PC-3 (cell line): ENCODE measurements at regions of chr6 and their contacts with region 1.

Region 1: DNA sequence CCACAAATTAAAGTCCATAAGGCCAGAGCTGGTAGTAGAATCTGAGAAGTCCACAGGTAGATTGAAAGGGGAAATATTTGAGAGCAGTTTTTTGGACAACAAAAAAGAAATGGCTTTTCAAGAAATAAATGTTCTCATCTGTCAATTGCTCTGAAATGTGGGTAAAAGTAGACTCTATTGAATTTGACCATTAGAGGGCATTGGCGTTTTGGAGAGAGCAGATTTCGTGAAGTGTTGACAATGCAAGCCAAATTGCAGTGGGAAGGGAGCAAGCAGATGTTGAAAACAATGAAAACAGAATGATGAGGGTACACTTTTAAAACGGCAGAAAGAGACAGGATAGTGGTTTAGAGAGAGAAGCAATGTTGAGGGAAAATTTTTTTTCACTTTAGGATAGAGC is 149.1 kb upstream of the FAM83B start:
- DNase-seq: peak; percentile 61
- ATAC-seq: peak; percentile 25; the same call in 1 of the 2 replicates
- H3K4me3 ChIP-seq: no peak overlapping the region
- H3K27ac ChIP-seq: no peak overlapping the region
- H3K4me1 ChIP-seq: peaks cover 42% of the 10 kb centered on the region
- H3K27me3 ChIP-seq: no peaks in the 10 kb centered on the region
- CTCF ChIP-seq: peak; percentile 72

Region 2: GRCh38 chr6:54515013-54515412 is 182.4 kb before region 1 on chr6:
- CTCF ChIA-PET with region 1: no interaction called
- POLR2A ChIA-PET with region 1: no interaction called
- intact Hi-C with region 1: loop called (anchors 1 kb)
- DNase-seq: peak; percentile 69
- ATAC-seq: peak; percentile 88
- H3K4me3 ChIP-seq: no peak overlapping the region
- H3K27ac ChIP-seq: no peak overlapping the region
- H3K4me1 ChIP-seq: peaks cover 5% of the 10 kb centered on the region; the same call in 1 of the 2 replicates
- H3K27me3 ChIP-seq: no peaks in the 10 kb centered on the region
- CTCF ChIP-seq: peak; percentile 26; the same call in 1 of the 2 replicates

Region 3: GRCh38 chr6:54665278-54665677 is 32.1 kb before region 1 on chr6:
- CTCF ChIA-PET with region 1: no interaction called
- POLR2A ChIA-PET with region 1: no interaction called
- intact Hi-C with region 1: no loop called
- DNase-seq: no peak
- ATAC-seq: no peak
- H3K4me3 ChIP-seq: no peak overlapping the region
- H3K27ac ChIP-seq: no peak overlapping the region
- H3K4me1 ChIP-seq: no peaks in the 10 kb centered on the region
- H3K27me3 ChIP-seq: no peaks in the 10 kb centered on the region
- CTCF ChIP-seq: no peak

Region 4: GRCh38 chr6:54929245-54929909 is 232.0 kb after region 1 on chr6:
- CTCF ChIA-PET with region 1: no interaction called
- POLR2A ChIA-PET with region 1: no interaction called
- intact Hi-C with region 1: loop called (anchors 5 kb)
- DNase-seq: peak; percentile 85
- ATAC-seq: peak; percentile 96
- H3K4me3 ChIP-seq: no peak overlapping the region
- H3K27ac ChIP-seq: peak overlapping the region; percentile 62
- H3K4me1 ChIP-seq: peaks cover 27% of the 10 kb centered on the region
- H3K27me3 ChIP-seq: no peaks in the 10 kb centered on the region
- CTCF ChIP-seq: no peak